Tibial artery (tissue), 4 donors: ENCODE measurements at regions of chr12 and their contacts with region 1.

Region 1: DNA sequence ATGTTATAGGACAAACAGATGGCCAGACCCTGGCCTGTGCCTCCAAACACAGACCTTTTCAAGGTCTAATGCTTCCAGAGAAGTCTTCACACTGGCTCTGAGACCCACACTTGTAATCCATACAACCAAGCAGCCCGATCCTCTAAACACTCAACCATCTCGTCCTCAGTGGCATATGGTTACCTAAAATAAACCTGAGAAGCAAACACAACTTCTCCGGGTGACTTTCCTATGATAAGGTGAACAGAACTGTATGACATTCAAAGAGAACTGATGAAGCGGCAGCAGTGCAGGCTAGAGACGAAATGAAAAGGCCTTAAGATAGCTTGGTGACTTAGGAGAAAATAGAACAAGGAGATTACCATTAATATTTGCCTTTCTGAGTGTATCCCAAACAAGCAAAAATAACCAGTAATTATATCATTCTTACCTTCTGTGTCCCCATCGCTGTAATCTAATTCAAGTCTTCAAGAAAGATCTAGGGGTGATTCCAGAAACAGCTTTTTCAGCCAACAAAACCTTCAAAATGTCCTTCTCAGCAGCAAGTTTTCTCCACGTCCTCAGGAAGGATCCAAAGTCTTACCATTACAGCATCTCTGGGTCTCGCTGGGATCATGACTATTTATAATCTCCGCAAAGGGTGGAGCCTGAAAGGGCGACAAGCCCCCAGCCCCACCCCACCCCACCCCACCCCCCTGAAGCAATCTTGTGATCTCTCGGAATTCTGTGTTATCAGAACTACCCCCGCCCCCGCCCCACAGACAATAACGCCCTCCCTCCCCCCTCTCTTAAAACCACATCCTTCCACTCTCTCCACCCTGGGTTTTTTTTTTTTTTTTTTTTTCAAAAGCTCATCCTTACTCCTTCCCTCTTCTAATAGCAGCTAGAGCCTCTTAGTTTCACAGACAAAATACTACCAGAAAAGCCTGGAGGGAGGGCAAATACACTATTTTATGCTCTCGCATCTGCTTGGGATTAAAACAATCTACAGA is at the start of gene SLC2A3:
- DNase-seq: peak; percentile 57 to 77
- H3K4me3 ChIP-seq: peak within 1 kb of the TSS; percentile 55 to 59
- H3K27ac ChIP-seq: peak within 1 kb of the TSS; percentile 72 to 78
- H3K4me1 ChIP-seq: peaks cover 0 to 28% (median 4%) of the 10 kb centered on the region in 4 donors
- H3K27me3 ChIP-seq: no peaks in the 10 kb centered on the region
- CTCF ChIP-seq: no peak

Region 2: DNA sequence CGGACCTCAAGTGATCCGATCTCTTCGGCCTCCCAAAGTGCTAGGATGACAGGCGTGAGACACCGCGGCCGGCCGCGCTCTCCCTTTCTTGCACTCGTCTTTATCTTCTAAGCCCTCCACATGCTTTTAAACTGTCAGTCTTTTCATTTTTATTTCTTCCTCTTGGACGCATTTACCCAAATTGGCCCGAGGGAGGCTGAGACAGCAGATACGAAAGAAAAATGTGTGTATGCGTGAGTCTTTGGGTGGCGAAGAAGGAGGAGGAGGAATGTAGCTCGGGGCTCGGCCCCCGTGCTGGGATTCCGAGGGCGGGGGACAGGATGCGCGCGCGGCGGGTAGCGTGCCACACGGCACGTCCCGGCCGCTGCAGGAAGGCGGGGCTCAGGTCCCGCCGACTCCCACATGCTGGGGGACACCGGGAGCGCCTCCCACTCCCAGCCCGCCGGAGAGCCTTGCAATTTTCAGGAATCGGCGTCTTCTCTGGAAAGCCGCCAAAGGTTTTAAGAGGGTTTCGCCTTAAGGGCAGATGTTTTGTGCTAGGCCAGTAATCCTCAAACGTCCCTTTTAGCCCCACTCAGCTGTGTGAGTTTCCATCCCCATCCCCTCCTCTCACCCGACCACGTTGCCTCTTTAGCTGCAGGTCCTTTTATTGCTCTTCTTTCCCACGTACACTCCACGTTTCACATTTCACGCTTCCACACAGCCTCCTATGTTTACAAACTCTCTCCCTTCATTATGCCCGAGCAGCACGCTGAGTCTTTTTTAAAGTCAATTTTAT is 34.8 kb after region 1 on chr12:
- intact Hi-C with region 1: loop called (anchors 5 kb)
- DNase-seq: peak; percentile 87 to 96
- H3K4me3 ChIP-seq: peak overlapping the region; percentile 51 to 59
- H3K27ac ChIP-seq: peak overlapping the region; percentile 78 to 80
- H3K4me1 ChIP-seq: peaks cover 0 to 17% (median 8%) of the 10 kb centered on the region in 4 donors
- H3K27me3 ChIP-seq: no peaks in the 10 kb centered on the region
- CTCF ChIP-seq: peak in 1 of 2 experiments; percentile 42

Region 3: DNA sequence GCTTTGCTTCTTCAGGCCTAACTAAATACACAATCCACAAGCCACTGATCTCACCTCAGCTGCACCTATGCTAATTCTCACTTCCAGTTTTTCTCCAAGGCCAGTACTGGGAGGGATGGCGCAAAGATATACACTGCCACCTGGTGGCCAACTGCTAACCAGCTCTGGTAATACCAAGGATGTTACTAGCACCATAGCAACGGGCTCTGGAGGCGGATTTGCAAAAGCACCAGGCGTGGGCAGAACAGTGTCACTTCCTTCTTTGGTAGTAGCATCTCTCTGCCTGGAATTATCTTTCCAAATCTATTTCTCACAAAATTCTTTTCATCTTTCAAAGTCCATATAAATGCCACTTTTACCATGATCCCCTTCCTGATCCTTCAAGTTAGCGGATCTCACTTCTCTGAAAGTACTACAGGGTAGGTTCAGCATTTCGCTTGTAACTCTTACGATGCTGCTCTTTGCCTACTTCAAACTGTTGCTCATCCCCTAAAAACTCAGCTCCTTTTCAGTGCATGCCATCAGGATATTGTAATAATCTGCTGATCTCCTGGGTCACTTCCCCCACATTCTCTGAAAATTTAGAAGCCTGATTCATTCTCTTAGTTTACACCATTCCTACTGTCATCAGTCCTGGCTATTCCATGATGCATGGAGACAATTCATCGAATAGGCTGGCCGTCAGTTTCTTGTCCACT is 59.5 kb after region 1 on chr12:
- intact Hi-C with region 1: loop called (anchors 5 kb)
- DNase-seq: peak; percentile 86 to 87
- H3K4me3 ChIP-seq: no peak overlapping the region
- H3K27ac ChIP-seq: no peak overlapping the region
- H3K4me1 ChIP-seq: no peaks in the 10 kb centered on the region
- H3K27me3 ChIP-seq: no peaks in the 10 kb centered on the region
- CTCF ChIP-seq: peak; percentile 79 to 88